ENCODE measurements at regions of chr12 and their contacts with region 1.

Region 1: GRCh38 chr12:93569656-93570551 is 2.6 kb upstream of the SOCS2 start:
- DNase-seq: peak; percentile 71
- H3K4me3 Mint-ChIP-seq: peak overlapping the region; percentile 83
- H3K27ac Mint-ChIP-seq: peak overlapping the region; percentile 83
- H3K4me1 Mint-ChIP-seq: peaks cover 17% of the 10 kb centered on the region
- H3K27me3 Mint-ChIP-seq: peaks cover 20% of the 10 kb centered on the region

Region 2: GRCh38 chr12:92987362-92987761 is 582.5 kb before region 1 on chr12:
- intact Hi-C with region 1: loop called (anchors 5 kb)
- DNase-seq: no peak
- H3K4me3 Mint-ChIP-seq: no peak overlapping the region
- H3K27ac Mint-ChIP-seq: peak overlapping the region; percentile 60
- H3K4me1 Mint-ChIP-seq: peaks cover 38% of the 10 kb centered on the region
- H3K27me3 Mint-ChIP-seq: no peaks in the 10 kb centered on the region

Region 3: DNA sequence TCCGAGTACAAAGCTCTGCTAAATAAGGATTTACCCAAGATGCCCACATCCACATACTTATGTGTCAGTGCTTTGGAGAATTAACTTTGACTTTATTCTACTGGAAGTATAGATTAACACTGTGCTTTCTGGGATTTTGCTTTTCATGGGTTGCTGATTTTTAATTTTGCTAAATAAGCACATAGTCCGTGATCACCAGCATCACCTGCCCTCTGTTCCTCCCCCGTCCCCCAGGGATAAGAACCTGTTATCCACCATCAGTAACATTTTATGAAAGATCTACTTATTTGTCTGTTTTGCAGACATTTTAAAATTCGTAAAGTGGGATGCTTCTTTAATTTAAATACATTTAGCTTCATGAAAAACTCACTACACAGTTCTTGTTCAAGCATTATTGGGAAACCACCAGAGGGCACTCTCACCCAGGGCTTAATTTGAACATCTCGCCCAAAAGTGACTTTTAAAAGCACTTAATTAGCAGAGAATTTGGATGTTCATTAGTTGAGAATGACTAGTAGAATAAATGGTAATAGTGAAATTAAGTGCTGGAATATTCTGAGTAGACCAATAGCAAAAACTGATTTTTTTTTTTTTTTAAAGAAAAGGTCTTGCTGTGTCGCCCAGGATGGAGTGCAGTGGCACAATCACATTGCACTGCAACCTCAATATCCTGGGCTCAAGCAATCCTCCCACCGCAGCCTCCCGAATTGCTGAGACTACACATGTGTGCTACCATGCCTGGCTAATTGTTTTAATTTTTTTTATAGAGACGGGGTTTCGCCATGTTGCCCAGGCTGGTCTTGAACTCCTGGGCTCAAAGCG is 66.9 kb before region 1 on chr12:
- intact Hi-C with region 1: loop called (anchors 2 kb)
- DNase-seq: peak; percentile 26
- H3K4me3 Mint-ChIP-seq: no peak overlapping the region
- H3K27ac Mint-ChIP-seq: no peak overlapping the region
- H3K4me1 Mint-ChIP-seq: peaks cover 15% of the 10 kb centered on the region
- H3K27me3 Mint-ChIP-seq: no peaks in the 10 kb centered on the region

Region 4: DNA sequence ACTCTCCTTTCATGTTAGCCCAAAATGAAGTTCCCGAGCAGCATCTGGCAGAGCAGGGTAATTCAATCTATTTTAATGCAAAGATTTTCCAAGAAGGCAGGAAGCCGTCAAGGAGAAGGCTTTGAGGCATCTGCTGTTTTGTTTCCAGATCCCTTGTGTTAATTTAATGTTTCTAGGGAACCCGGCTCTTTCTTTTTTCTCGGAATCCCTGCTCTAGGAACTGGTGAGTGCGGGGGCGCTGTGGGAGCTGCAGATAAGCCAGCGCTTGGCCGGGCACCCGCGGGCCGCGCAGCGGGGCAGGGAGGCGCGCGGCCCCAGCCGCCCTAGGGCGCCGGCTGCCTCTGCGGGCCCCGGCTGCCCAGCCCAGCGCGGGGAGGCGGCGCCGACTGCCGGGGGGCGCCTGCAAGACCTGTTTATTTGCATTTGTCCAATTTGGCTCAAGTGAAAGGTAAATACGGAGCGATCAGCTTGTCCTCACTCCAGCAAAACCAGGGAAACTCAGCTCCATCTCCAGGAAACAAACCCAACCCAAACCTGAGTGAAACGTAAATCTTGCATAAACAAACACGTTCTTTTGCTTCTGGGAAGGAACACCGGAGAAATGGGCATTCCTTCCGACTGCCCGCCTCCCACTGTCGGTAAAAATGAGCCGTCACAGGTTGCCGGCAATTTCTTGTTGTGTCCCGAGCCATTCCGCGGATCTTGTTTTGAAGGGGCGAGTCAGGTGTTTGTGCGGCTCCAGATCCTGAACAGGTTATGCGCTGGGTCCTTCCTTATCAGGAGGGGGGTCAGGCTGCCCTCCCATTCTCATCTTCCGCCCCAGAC is 172.4 kb after region 1 on chr12:
- intact Hi-C with region 1: loop called (anchors 1 kb)
- DNase-seq: peak; percentile 32
- H3K4me3 Mint-ChIP-seq: peak overlapping the region; percentile 82
- H3K27ac Mint-ChIP-seq: peak overlapping the region; percentile 79
- H3K4me1 Mint-ChIP-seq: peaks cover 30% of the 10 kb centered on the region
- H3K27me3 Mint-ChIP-seq: peaks cover 1% of the 10 kb centered on the region

Region 5: GRCh38 chr12:93847517-93848474 is 277.9 kb after region 1 on chr12:
- intact Hi-C with region 1: loop called (anchors 5 kb)
- DNase-seq: no peak
- H3K4me3 Mint-ChIP-seq: peak overlapping the region; percentile 40
- H3K27ac Mint-ChIP-seq: peak overlapping the region; percentile 81
- H3K4me1 Mint-ChIP-seq: peaks cover 54% of the 10 kb centered on the region
- H3K27me3 Mint-ChIP-seq: no peaks in the 10 kb centered on the region

Region 6: DNA sequence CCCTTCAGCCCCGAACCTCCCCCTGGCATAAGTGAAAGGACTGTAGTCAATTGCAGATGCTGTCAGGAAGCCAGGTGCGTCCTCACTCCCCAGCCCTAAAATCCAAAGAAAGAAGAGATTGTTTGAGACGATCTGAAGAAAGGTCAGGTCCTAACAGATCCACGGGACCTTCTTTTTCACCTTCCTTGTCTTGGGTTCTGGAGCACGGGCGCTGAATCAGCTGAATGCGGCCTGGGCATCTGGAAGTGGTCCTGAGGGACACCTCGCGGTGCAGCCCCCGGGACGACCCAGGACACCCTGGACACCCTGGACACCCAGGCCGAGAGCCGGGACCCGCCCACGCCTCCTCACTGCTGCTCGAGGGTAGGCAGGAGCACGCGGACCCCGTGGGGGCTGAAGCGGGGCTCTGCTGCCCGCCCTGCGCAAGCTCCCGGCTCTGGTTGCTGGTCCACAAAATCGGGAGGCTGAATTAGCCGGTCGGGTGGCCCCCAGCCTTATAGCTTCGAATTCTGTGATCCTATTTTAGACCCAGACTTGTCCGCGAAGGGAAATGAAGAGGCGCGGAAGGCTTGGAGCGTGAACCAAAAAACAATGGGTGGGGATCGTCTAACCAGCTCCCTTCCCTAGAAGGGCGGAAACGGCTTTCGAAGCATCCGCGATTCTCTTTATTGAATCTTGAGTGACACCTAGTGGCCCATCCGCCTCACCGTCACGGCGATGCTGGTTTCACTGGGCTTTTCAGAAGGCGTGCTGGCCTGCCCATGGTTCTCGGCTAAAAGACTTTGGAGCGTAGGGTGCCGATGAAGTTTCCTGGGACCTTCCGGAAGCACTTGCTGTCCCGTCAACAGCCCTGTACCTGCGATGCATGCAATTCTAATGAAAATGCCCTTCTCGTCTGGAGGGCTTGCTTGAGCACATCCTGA is 532.1 kb after region 1 on chr12:
- intact Hi-C with region 1: loop called (anchors 1 kb)
- DNase-seq: peak; percentile 81
- H3K4me3 Mint-ChIP-seq: peak overlapping the region; percentile 77
- H3K27ac Mint-ChIP-seq: peak overlapping the region; percentile 62
- H3K4me1 Mint-ChIP-seq: peaks cover 35% of the 10 kb centered on the region
- H3K27me3 Mint-ChIP-seq: peaks cover 2% of the 10 kb centered on the region

Measured in activated T-helper 2 cell treated with anti-CD3 and anti-CD28 coated beads, Interferon-gamma antibody, Interleukin-2, Interleukin-4, amounts not matched to agents 10 μg/mL and 5 μg/mL and 100 μg/mL, durations not matched to agents 14 hours and 24 hours and 36 hours (primary cell).